ENCODE measurements at regions of chrX and their contacts with region 1.

Region 1: GRCh38 chrX:153582896-153583295 is 16.0 kb downstream of the CCNQ start:
- DNase-seq: peak; percentile 84
- ATAC-seq: peak; percentile 100
- H3K4me3 ChIP-seq: peak overlapping the region in 3 of 5 experiments; percentile 9 to 26 (median 18)
- H3K4me3 Mint-ChIP-seq: peak overlapping the region; percentile 73
- H3K27ac ChIP-seq: peak overlapping the region in 1 of 2 donors; percentile 16
- H3K27ac Mint-ChIP-seq: peak overlapping the region; percentile 81
- H3K4me1 ChIP-seq: peaks cover 15 to 27% of the 10 kb centered on the region in 2 donors
- H3K4me1 Mint-ChIP-seq: peaks cover 25% of the 10 kb centered on the region
- H3K27me3 ChIP-seq: no peaks in the 10 kb centered on the region
- H3K27me3 Mint-ChIP-seq: no peaks in the 10 kb centered on the region
- CTCF ChIP-seq: no peak

Region 2: GRCh38 chrX:153599192-153600031 is 16.5 kb after region 1 on chrX:
- CTCF ChIA-PET with region 1: interaction called, 4 read pairs
- POLR2A ChIA-PET with region 1: interaction called, 3 read pairs
- intact Hi-C with region 1: loop called (anchors 1 kb)
- DNase-seq: peak; percentile 90
- ATAC-seq: peak; percentile 84
- H3K4me3 ChIP-seq: peak overlapping the region; percentile 40 to 77 (median 73)
- H3K4me3 Mint-ChIP-seq: peak overlapping the region; percentile 82
- H3K27ac ChIP-seq: peak overlapping the region; percentile 18 to 64
- H3K27ac Mint-ChIP-seq: peak overlapping the region; percentile 67
- H3K4me1 ChIP-seq: peaks cover 29 to 41% of the 10 kb centered on the region in 2 donors
- H3K4me1 Mint-ChIP-seq: peaks cover 41% of the 10 kb centered on the region
- H3K27me3 ChIP-seq: no peaks in the 10 kb centered on the region
- H3K27me3 Mint-ChIP-seq: no peaks in the 10 kb centered on the region
- CTCF ChIP-seq: no peak

Measured in B cell (primary cell).